Vagina (tissue), 2 donors: ENCODE measurements at regions of chr11 and their contacts with region 1.

Region 1: DNA sequence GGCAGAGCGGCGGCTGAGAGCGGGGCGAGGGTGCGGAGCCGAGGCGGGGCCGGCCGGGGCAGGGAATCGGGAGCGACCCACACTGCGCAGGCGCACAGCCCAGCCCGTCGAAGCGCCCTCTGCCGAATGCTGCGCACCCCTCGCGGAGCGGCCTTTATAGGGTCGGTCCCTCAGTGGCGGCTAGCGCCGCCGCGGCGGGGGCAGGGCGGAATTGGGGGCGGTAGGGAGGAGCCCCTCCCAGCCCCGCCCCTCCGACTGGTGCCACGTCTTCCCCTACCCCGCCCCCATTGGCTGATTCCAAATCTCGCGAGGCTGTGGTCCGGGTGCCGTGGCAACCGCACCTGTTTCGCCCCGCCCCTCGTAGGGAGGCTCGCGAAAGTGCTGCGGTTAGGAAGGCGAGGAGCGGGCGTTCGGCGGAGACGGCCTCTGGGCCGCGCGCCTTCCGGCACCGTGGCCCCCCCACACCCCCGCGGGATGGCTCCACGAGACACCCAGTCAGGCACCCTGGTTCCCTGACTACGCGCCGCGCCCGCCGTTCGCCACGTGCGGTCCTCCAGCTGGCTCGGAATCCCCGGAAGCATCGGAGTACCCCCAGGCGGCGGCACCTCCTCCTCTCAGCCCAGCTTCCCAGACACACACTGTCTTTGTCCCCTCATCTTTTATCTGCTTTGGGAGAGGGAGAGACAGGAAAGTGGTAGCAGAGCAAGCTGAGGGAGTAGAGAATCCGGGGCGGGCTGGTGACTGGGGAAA is at the start of gene EHD1:
- DNase-seq: peak in 1 of 2 donors; percentile 98
- H3K4me3 ChIP-seq: peak within 1 kb of the TSS; percentile 83 to 86
- H3K27ac ChIP-seq: peak within 1 kb of the TSS; percentile 88
- H3K4me1 ChIP-seq: peaks cover 57% of the 10 kb centered on the region
- H3K27me3 ChIP-seq: no peaks in the 10 kb centered on the region
- CTCF ChIP-seq: peak in 1 of 3 experiments; percentile 14
- POLR2A ChIP-seq: peak; percentile 84 to 97
- total RNA-seq, gene EHD1: 61.6 TPM

Region 2: GRCh38 chr11:64687204-64687603 is 191.5 kb before region 1 on chr11:
- intact Hi-C with region 1: no loop called
- DNase-seq: no peak
- H3K4me3 ChIP-seq: no peak overlapping the region
- H3K27ac ChIP-seq: peak overlapping the region; percentile 77
- H3K4me1 ChIP-seq: peaks cover 18% of the 10 kb centered on the region
- H3K27me3 ChIP-seq: no peaks in the 10 kb centered on the region
- CTCF ChIP-seq: no peak
- POLR2A ChIP-seq: no peak

Region 3: GRCh38 chr11:64856382-64857227 is 22.1 kb before region 1 on chr11:
- intact Hi-C with region 1: loop called (anchors 2 kb)
- DNase-seq: no peak
- H3K4me3 ChIP-seq: no peak overlapping the region
- H3K27ac ChIP-seq: peak overlapping the region; percentile 79
- H3K4me1 ChIP-seq: peaks cover 43% of the 10 kb centered on the region
- H3K27me3 ChIP-seq: no peaks in the 10 kb centered on the region
- CTCF ChIP-seq: no peak
- POLR2A ChIP-seq: no peak

Region 4: GRCh38 chr11:64924102-64924851 is 45.6 kb after region 1 on chr11 and contains the start of gene PPP2R5B:
- intact Hi-C with region 1: loop called (anchors 1 kb)
- DNase-seq: peak in 1 of 2 donors; percentile 98
- H3K4me3 ChIP-seq: peak within 1 kb of the TSS; percentile 76 to 83
- H3K27ac ChIP-seq: peak within 1 kb of the TSS; percentile 97
- H3K4me1 ChIP-seq: peaks cover 26% of the 10 kb centered on the region
- H3K27me3 ChIP-seq: no peaks in the 10 kb centered on the region
- CTCF ChIP-seq: no peak
- POLR2A ChIP-seq: peak in 1 of 2 donors; percentile 75
- total RNA-seq, gene PPP2R5B: 16.9 TPM